ENCODE measurements at regions of chr1 and their contacts with region 1.

Region 1: DNA sequence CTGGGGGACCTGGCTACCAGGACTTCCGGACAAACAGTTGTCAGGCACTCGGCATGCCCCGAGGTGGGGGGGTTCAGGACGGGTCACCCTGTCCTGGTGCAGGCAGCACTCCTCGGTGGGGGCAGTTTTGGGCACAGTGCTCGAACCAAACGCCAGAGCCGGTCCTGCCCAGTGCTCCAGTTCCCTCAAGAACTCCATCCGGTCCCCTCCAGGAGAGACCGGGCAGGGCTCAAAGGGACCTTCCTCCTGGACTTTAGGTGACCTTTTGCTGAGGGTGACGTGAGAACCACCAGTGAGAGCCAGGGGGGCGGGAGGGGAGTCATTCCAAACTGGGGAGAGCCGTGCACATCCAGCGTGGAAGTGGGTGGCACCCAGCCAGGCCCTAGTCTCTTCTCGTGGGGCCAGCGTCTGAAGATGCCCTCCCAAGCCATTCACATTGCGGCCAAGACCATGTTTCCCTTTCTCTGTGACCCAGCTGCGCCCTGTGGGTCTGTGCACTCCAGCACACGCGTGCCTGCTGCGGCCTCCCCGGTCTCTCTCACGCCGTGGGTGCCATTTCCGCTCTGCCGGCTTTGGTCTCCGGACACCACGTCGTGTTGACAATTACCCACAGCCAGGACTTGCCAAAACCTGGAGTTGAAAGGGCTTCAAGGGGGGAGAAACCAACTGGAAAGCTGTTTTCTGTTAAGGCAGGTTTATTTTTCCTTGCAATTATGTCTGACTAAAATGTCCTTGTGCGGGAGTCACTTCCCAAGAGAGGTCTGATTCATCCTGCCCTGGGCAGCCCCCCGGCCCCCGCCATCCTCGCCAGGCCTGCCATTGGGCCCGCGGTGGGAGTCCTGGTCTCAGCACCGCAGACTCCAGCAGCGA is 178.8 kb upstream of the ARHGEF16 start:
- DNase-seq: no peak
- H3K4me3 ChIP-seq: no peak overlapping the region
- H3K27ac ChIP-seq: no peak overlapping the region
- H3K4me1 ChIP-seq: no peaks in the 10 kb centered on the region
- H3K27me3 ChIP-seq: peaks cover under 1% of the 10 kb centered on the region
- CTCF ChIP-seq: no peak
- EP300 ChIP-seq: no peak
- POLR2A ChIP-seq: no peak

Region 2: GRCh38 chr1:3054474-3054873 is 221.2 kb before region 1 on chr1:
- in situ Hi-C with region 1: no loop called
- intact Hi-C with region 1: loop called (anchors 10 kb)
- DNase-seq: no peak
- H3K4me3 ChIP-seq: no peak overlapping the region
- H3K27ac ChIP-seq: no peak overlapping the region
- H3K4me1 ChIP-seq: no peaks in the 10 kb centered on the region
- H3K27me3 ChIP-seq: peaks cover 50% of the 10 kb centered on the region
- CTCF ChIP-seq: no peak
- EP300 ChIP-seq: no peak
- POLR2A ChIP-seq: no peak

Region 3: GRCh38 chr1:3336641-3337637 is 61.2 kb after region 1 on chr1:
- in situ Hi-C with region 1: no loop called
- intact Hi-C with region 1: no loop called
- DNase-seq: no peak
- H3K4me3 ChIP-seq: no peak overlapping the region
- H3K27ac ChIP-seq: no peak overlapping the region
- H3K4me1 ChIP-seq: no peaks in the 10 kb centered on the region
- H3K27me3 ChIP-seq: no peaks in the 10 kb centered on the region
- CTCF ChIP-seq: no peak
- EP300 ChIP-seq: no peak
- POLR2A ChIP-seq: no peak

Measured in transverse colon (tissue), 4 donors.